ENCODE measurements at regions of chr7 and their contacts with region 1.

Region 1: DNA sequence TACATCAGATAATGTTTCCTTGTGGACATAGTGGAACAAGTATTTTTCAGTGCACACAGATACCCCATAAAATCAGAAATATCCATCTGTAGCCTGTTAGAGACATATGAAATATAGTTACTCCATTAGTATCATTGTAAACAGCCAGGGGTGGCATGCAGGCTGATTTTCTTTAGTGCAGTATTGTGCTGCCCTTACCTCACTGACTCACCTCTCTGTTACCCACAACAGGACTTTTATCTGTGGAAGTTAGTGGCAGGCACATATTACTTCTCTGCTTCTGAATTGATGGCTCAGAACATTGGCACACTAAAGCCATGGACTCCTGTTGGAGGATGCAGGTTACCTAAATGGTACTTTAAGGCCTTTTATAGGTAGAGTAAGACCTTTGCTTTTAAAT is 70.0 kb downstream of the SLC25A40 start:
- DNase-seq: no peak
- CTCF ChIP-seq: no peak

Region 2: GRCh38 chr7:87600130-87601124 is 205.7 kb before region 1 on chr7 and contains the start of gene ABCB1:
- in situ Hi-C with region 1: no loop called
- DNase-seq: peak; percentile 74
- CTCF ChIP-seq: no peak

Region 3: DNA sequence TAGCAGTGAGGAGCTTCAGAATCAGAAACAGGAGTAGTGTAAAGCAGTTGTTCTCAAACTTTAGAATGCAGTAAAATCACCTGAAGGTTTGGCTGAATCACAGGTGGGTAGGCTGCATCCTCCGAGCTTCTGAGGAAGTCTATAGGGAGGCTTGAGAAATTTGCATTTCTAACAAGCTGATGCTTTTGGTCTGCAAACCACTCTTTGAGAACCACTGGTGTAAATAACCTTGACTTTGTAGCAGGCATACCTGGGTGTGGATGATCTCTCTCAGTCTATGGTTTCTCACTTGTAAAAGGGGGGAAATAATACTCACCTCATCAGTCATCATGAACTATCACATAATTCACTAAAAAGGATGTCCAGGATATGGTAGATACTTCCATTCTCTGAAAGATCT is 295.6 kb after region 1 on chr7:
- in situ Hi-C with region 1: loop called (anchors 10 kb)
- DNase-seq: no peak
- CTCF ChIP-seq: no peak

Region 4: GRCh38 chr7:88169717-88170320 is 363.7 kb after region 1 on chr7:
- in situ Hi-C with region 1: no loop called
- DNase-seq: no peak
- CTCF ChIP-seq: peak; percentile 28